Calu3 (cell line): ENCODE measurements at regions of chr6 and their contacts with region 1.

Region 1: GRCh38 chr6:108113557-108114519 is 39.3 kb upstream of the OSTM1 start:
- DNase-seq: peak; percentile 64
- H3K4me3 Mint-ChIP-seq: no peak overlapping the region
- H3K27ac Mint-ChIP-seq: no peak overlapping the region
- H3K4me1 Mint-ChIP-seq: peaks cover 22% of the 10 kb centered on the region
- H3K27me3 Mint-ChIP-seq: peaks cover 65% of the 10 kb centered on the region
- CTCF ChIP-seq: peak; percentile 50

Region 2: GRCh38 chr6:108074359-108075144 is 39.3 kb before region 1 on chr6 and contains the start of gene OSTM1:
- CTCF ChIA-PET with region 1: no interaction called
- intact Hi-C with region 1: no loop called
- DNase-seq: peak; percentile 95
- H3K4me3 Mint-ChIP-seq: peak within 1 kb of the TSS; percentile 75
- H3K27ac Mint-ChIP-seq: no peak within 1 kb of the TSS
- H3K4me1 Mint-ChIP-seq: peaks cover 10% of the 10 kb centered on the region
- H3K27me3 Mint-ChIP-seq: no peaks in the 10 kb centered on the region
- CTCF ChIP-seq: no peak
- total RNA-seq, gene OSTM1: 19.4 and 30.5 TPM in 2 replicates

Region 3: GRCh38 chr6:108163267-108163643 is 49.4 kb after region 1 on chr6:
- CTCF ChIA-PET with region 1: no interaction called
- intact Hi-C with region 1: loop called (anchors 5 kb)
- DNase-seq: no peak
- H3K4me3 Mint-ChIP-seq: no peak overlapping the region
- H3K27ac Mint-ChIP-seq: no peak overlapping the region
- H3K4me1 Mint-ChIP-seq: no peaks in the 10 kb centered on the region
- H3K27me3 Mint-ChIP-seq: peaks cover 94% of the 10 kb centered on the region
- CTCF ChIP-seq: no peak

Region 4: DNA sequence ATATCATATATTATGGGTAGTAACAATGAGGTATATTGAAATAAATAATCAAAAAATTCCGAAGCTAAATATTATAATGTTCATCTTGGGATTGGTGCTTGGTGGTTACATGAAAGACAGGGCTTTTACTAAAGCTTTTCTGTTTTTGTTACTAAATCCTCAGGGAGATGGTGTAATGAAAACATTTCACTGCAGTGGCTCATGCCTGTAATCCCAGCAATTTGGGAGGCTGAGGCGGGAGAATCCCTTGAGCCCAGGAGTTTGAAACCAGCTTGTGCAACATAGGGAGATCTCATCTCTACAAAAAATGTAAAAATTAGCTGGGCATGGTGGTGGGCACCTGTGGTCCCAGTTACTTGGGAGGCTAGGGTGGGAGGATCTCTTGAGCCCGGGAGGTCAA is 223.9 kb after region 1 on chr6:
- CTCF ChIA-PET with region 1: no interaction called
- intact Hi-C with region 1: no loop called
- DNase-seq: no peak
- H3K4me3 Mint-ChIP-seq: no peak overlapping the region
- H3K27ac Mint-ChIP-seq: no peak overlapping the region
- H3K4me1 Mint-ChIP-seq: no peaks in the 10 kb centered on the region
- H3K27me3 Mint-ChIP-seq: no peaks in the 10 kb centered on the region
- CTCF ChIP-seq: no peak

Region 5: DNA sequence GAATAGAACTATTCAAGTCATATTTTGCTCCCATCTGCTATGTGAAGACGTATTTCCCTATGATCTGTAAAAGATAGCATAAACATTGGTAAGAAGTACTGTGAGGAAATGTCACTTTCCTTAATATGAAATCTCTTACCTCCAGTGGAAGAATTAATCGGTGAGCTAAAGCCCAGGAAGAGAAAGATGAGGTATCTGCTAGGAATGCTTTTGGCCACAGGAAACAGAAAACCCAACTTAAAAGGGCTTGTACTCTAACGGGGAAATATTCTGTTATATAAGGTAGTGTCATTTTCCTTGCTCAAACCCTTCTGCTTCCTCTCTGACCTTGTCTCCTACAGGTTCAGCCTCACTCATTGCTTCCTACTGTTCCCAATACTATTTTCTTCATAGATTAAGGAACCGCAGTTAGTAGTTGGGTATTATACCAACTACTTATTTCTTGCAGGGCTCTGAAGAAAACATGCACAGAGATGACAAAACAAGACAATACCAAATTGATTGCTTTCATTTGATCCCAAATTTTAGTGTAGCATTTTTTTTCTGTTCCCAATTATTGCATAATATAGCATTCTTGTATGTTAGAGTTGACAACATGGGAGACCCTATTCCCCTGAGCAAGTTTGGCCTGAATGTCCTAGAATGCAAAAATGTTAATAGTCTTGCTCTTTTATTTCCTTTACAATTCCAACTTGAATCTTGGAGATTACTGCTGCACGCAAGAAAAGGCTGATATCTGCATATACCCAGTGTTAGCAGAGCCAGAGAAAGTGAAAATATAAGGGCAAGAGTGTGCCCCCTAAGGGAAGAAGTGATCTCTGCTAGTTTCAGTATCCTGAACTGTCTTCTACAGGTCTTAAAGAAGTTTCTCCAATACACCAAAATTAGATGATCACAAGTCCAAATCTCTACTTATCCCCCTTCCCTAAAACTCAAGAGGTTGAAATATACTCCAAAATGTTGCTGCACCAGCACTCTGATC is 246.4 kb after region 1 on chr6:
- CTCF ChIA-PET with region 1: no interaction called
- intact Hi-C with region 1: loop called (anchors 5 kb)
- DNase-seq: no peak
- H3K4me3 Mint-ChIP-seq: no peak overlapping the region
- H3K27ac Mint-ChIP-seq: no peak overlapping the region
- H3K4me1 Mint-ChIP-seq: peaks cover 9% of the 10 kb centered on the region
- H3K27me3 Mint-ChIP-seq: no peaks in the 10 kb centered on the region
- CTCF ChIP-seq: no peak

Region 6: DNA sequence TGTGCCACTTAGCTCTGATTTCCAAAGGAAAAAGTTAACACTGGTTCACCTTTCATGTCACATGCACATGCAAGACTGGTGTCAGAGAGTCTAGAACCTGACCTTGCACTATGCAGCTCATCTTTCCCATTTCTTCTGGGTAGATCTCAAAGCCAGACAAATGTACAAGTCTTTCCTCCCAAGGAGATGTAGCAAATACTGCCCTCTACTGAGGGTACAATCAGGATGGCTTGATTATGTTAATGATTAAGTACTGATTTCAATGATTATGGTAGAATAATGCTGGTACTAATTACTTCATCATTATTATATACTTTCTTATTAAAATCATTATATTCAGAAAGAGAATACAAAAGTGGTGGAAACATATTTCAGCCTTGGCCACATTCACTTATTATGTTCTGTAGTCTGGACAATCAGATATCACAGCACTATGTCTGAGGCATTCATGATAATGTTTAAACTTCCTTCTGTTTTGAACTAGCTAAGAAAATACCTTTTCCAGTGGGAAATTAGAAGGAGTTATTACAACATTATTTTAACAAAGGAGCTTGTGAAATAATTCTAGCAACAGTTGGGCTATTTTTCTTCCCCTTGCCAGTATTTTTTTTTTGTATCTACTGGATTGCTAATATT is 378.4 kb after region 1 on chr6:
- CTCF ChIA-PET with region 1: interaction called, 11 read pairs
- intact Hi-C with region 1: loop called (anchors 1 kb)
- DNase-seq: peak; percentile 17
- H3K4me3 Mint-ChIP-seq: no peak overlapping the region
- H3K27ac Mint-ChIP-seq: no peak overlapping the region
- H3K4me1 Mint-ChIP-seq: no peaks in the 10 kb centered on the region
- H3K27me3 Mint-ChIP-seq: no peaks in the 10 kb centered on the region
- CTCF ChIP-seq: no peak

Region 7: GRCh38 chr6:108526739-108527174 is 412.9 kb after region 1 on chr6:
- CTCF ChIA-PET with region 1: no interaction called
- intact Hi-C with region 1: loop called (anchors 1 kb)
- DNase-seq: no peak
- H3K4me3 Mint-ChIP-seq: no peak overlapping the region
- H3K27ac Mint-ChIP-seq: no peak overlapping the region
- H3K4me1 Mint-ChIP-seq: no peaks in the 10 kb centered on the region
- H3K27me3 Mint-ChIP-seq: no peaks in the 10 kb centered on the region
- CTCF ChIP-seq: peak; percentile 72